ENCODE measurements at regions of chr1 and their contacts with region 1.

Region 1: DNA sequence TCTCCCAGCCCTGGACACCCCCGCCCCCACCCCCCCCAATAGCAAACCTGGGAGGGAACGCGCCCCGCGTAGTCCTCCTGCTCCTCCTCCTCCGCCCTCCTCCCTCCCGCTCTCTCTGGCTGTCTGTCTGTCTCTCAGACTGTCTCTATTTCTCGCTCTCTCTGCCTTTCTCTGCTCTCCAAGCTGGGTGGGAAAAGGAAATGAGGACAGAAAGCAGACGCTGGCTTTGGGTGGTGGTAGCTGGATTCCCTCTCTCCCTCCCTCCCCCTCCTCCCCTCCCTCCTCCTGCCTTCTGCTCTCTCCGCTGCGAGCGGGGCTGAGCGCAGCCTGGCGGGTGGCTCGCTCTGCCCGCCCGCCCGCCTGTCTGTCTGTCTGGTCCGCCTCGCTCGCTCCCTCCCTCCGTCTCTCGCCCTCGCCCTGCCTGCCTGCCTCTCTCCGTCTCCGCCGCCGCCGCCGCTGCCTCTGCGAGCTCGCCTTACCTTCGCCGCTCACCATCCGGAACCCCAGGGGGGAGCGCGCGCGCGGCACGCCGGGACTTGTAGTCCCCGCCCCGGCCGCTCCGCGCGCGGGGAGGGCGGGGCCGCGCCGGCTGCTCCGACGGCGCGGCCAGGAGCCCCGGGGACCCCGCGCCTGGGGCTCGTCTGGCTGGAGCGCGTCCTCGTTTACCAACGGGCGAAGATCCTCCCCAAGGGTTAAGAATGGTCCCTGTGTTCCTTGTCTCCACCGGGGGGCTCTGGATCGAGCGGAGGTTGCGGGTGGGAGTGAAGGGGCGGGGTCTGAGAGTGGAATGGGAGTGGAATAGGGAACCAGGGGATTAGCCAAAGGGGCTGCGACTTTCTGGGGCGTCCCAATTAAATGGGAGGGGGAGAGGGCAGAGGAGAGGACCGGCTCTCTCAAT is at the start of gene AHDC1:
- DNase-seq: peak; percentile 89
- ATAC-seq: peak; percentile 78
- H3K4me3 Mint-ChIP-seq: peak within 1 kb of the TSS; percentile 95
- H3K27ac Mint-ChIP-seq: peak within 1 kb of the TSS; percentile 83
- H3K4me1 Mint-ChIP-seq: peaks cover 49% of the 10 kb centered on the region
- H3K27me3 Mint-ChIP-seq: no peaks in the 10 kb centered on the region
- CTCF ChIP-seq: no peak
- total RNA-seq, gene AHDC1: 22.4 and 23.3 TPM in 2 replicates

Region 2: DNA sequence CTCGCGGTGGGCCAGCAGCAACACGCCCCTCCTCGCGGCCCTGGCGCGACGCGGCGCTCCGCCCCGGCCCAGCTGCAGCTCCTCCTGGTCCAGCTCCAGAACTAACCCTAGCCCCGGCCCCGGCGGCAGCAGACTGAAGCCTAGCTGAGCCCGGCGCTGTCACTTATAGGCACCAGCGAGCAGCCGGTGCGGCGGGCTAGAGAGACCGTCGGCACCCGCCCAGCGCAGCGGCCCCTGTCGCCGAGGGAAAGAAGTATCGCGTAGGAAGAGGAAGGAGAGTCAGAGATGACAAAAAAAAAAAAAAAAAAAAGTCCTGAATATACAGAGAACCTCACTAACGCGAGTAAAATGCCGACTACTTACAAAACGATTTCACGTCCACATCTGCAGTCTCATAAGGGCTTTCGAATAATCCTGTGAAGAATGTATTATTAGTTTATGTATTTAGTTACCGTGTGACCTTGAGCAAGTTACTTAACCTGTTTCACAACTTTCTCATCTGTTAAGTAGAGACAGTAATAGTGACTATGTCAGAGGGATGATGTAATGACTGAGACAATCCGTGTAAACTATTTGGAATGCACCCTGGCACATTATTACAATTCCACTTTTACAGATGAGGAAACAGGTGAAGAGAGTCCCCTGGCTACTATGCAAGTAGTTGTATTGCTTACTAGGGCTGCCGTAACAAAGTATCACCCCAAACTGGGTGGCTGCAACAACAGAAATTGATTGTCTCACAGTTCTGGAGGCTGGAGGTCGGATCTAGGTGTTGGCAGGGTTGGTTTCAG is 448.7 kb before region 1 on chr1 and contains the start of gene SLC9A1:
- CTCF ChIA-PET with region 1: no interaction called
- POLR2A ChIA-PET with region 1: interaction called, 12 read pairs
- intact Hi-C with region 1: no loop called
- DNase-seq: peak; percentile 94
- ATAC-seq: peak; percentile 95
- H3K4me3 Mint-ChIP-seq: peak within 1 kb of the TSS; percentile 86
- H3K27ac Mint-ChIP-seq: peak within 1 kb of the TSS; percentile 98
- H3K4me1 Mint-ChIP-seq: peaks cover 48% of the 10 kb centered on the region
- H3K27me3 Mint-ChIP-seq: no peaks in the 10 kb centered on the region
- CTCF ChIP-seq: peak; percentile 22
- total RNA-seq, gene SLC9A1: 12.2 and 13.6 TPM in 2 replicates

Region 3: GRCh38 chr1:27357281-27358037 is 246.5 kb before region 1 on chr1:
- CTCF ChIA-PET with region 1: interaction called, 14 read pairs
- POLR2A ChIA-PET with region 1: no interaction called
- intact Hi-C with region 1: loop called (anchors 1 kb)
- DNase-seq: peak; percentile 80
- ATAC-seq: peak; percentile 66
- H3K4me3 Mint-ChIP-seq: peak overlapping the region; percentile 76
- H3K27ac Mint-ChIP-seq: peak overlapping the region; percentile 56
- H3K4me1 Mint-ChIP-seq: peaks cover 46% of the 10 kb centered on the region
- H3K27me3 Mint-ChIP-seq: no peaks in the 10 kb centered on the region
- CTCF ChIP-seq: peak; percentile 69

Region 4: GRCh38 chr1:27489910-27490741 is 113.8 kb before region 1 on chr1 and contains the start of gene WASF2:
- CTCF ChIA-PET with region 1: interaction called, 3 read pairs
- POLR2A ChIA-PET with region 1: interaction called, 3 read pairs
- intact Hi-C with region 1: loop called (anchors 2 kb)
- DNase-seq: peak; percentile 94
- ATAC-seq: peak; percentile 88
- H3K4me3 Mint-ChIP-seq: peak within 1 kb of the TSS; percentile 95
- H3K27ac Mint-ChIP-seq: peak within 1 kb of the TSS; percentile 100
- H3K4me1 Mint-ChIP-seq: peaks cover 59% of the 10 kb centered on the region
- H3K27me3 Mint-ChIP-seq: no peaks in the 10 kb centered on the region
- CTCF ChIP-seq: no peak
- total RNA-seq, gene WASF2: 136 and 137 TPM in 2 replicates

Region 5: GRCh38 chr1:27624467-27625178 is 20.7 kb after region 1 on chr1:
- CTCF ChIA-PET with region 1: interaction called, 17 read pairs
- POLR2A ChIA-PET with region 1: interaction called, 8 read pairs
- intact Hi-C with region 1: loop called (anchors 1 kb)
- DNase-seq: no peak
- ATAC-seq: no peak
- H3K4me3 Mint-ChIP-seq: no peak overlapping the region
- H3K27ac Mint-ChIP-seq: no peak overlapping the region
- H3K4me1 Mint-ChIP-seq: peaks cover 35% of the 10 kb centered on the region
- H3K27me3 Mint-ChIP-seq: no peaks in the 10 kb centered on the region
- CTCF ChIP-seq: no peak

Region 6: GRCh38 chr1:28412731-28413130 is 808.8 kb after region 1 on chr1:
- CTCF ChIA-PET with region 1: no interaction called
- POLR2A ChIA-PET with region 1: no interaction called
- intact Hi-C with region 1: no loop called
- DNase-seq: no peak
- ATAC-seq: no peak
- H3K4me3 Mint-ChIP-seq: no peak overlapping the region
- H3K27ac Mint-ChIP-seq: no peak overlapping the region
- H3K4me1 Mint-ChIP-seq: peaks cover 10% of the 10 kb centered on the region
- H3K27me3 Mint-ChIP-seq: no peaks in the 10 kb centered on the region
- CTCF ChIP-seq: no peak